Heart left ventricle (tissue), 16 donors: ENCODE measurements at regions of chr18 and their contacts with region 1.

Region 1: DNA sequence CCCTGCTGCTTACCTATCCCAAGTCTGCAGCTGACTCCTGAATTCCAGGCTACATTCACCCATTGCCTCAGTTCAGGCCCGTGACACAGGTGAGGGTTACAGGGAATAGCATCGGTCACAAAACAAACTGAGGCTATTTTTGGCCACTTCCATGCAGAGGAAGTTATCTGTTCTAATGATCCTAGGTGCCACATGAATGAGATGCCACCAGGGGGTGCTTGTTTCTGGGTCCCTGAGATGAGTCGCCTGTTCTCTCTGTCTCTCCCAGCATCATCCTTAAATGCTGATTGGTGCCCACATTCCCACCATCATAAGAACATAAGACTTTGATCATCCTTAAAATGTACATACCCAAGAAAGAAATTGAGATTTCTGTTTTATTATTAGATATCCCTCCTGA is 119.0 kb upstream of the CELF4 start:
- DNase-seq: no peak
- ATAC-seq: no peak
- H3K4me3 ChIP-seq: no peak overlapping the region
- H3K27ac ChIP-seq: no peak overlapping the region
- H3K4me1 ChIP-seq: no peaks in the 10 kb centered on the region
- H3K27me3 ChIP-seq: peaks cover 0 to 8% (median 0%) of the 10 kb centered on the region in 9 donors
- CTCF ChIP-seq: no peak
- POLR2A ChIP-seq: no peak

Region 2: GRCh38 chr18:37624318-37624717 is 60.3 kb before region 1 on chr18:
- intact Hi-C with region 1: loop called in 1 of 10 experiments (anchors 10 kb)
- DNase-seq: no peak
- ATAC-seq: no peak
- H3K4me3 ChIP-seq: no peak overlapping the region
- H3K27ac ChIP-seq: no peak overlapping the region
- H3K4me1 ChIP-seq: no peaks in the 10 kb centered on the region
- H3K27me3 ChIP-seq: no peaks in the 10 kb centered on the region
- CTCF ChIP-seq: no peak
- POLR2A ChIP-seq: no peak

Region 3: GRCh38 chr18:37754141-37754540 is 69.6 kb after region 1 on chr18:
- intact Hi-C with region 1: no loop called
- DNase-seq: no peak
- ATAC-seq: no peak
- H3K4me3 ChIP-seq: no peak overlapping the region
- H3K27ac ChIP-seq: no peak overlapping the region
- H3K4me1 ChIP-seq: no peaks in the 10 kb centered on the region
- H3K27me3 ChIP-seq: peaks cover 0 to 7% (median 0%) of the 10 kb centered on the region in 9 donors
- CTCF ChIP-seq: no peak
- POLR2A ChIP-seq: no peak